A549 (cell line): ENCODE measurements at regions of chr11 and their contacts with region 1.

Region 1: GRCh38 chr11:45964911-45965389 is 42.5 kb downstream of the LARGE2 start:
- DNase-seq: peak; percentile 65 to 75
- ATAC-seq: peak; percentile 97 to 99
- H3K4me3 ChIP-seq: no peak overlapping the region
- H3K27ac ChIP-seq: no peak overlapping the region
- H3K4me1 ChIP-seq: no peaks in the 10 kb centered on the region
- CTCF ChIP-seq: peak; percentile 92
- EP300 ChIP-seq: no peak
- POLR2A ChIP-seq: no peak
- RAD21 ChIP-seq: peak; percentile 61 to 73

Region 2: GRCh38 chr11:45917623-45918330 is 47.2 kb before region 1 on chr11 and contains the start of gene PEX16:
- CTCF ChIA-PET with region 1: interaction called, 12 read pairs
- POLR2A ChIA-PET with region 1: no interaction called
- DNase-seq: peak; percentile 97 to 99
- ATAC-seq: peak; percentile 86 to 92
- H3K4me3 ChIP-seq: peak within 1 kb of the TSS; percentile 81
- H3K27ac ChIP-seq: peak within 1 kb of the TSS; percentile 88 to 96
- H3K4me1 ChIP-seq: peaks cover 13% of the 10 kb centered on the region; the same call in 2 of the 3 replicates
- CTCF ChIP-seq: no peak
- EP300 ChIP-seq: no peak
- POLR2A ChIP-seq: peak; percentile 87
- RAD21 ChIP-seq: no peak
- polyA plus RNA-seq, gene PEX16: 18.0 and 20.2 TPM in 2 replicates

Region 3: GRCh38 chr11:45935349-45936064 is 29.4 kb before region 1 on chr11:
- CTCF ChIA-PET with region 1: interaction called, 12 read pairs
- POLR2A ChIA-PET with region 1: no interaction called
- DNase-seq: no peak
- ATAC-seq: no peak
- H3K4me3 ChIP-seq: no peak overlapping the region
- H3K27ac ChIP-seq: no peak overlapping the region
- H3K4me1 ChIP-seq: no peaks in the 10 kb centered on the region
- CTCF ChIP-seq: no peak
- EP300 ChIP-seq: no peak
- POLR2A ChIP-seq: no peak
- RAD21 ChIP-seq: no peak

Region 4: DNA sequence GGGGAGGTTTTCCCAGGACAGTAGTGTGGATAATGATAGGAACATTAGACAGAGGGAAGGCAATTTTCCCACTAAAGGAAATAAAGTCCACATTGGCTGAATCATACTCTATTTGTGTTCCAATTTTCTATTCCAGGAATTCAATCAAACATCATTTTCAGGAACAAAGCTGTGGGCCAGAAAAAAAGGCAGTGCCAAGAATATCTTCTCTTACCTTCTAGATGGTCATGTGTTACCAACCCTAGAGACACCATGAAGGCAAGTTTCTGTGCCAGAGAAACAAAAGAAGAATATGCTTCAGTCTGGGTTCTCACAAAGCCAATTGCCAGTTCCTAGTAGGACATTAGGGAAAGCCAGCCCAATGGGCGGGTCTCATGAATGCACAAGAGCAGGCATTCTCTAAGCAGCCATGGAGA is 14.9 kb before region 1 on chr11:
- CTCF ChIA-PET with region 1: interaction called, 47 read pairs
- POLR2A ChIA-PET with region 1: no interaction called
- DNase-seq: no peak
- ATAC-seq: no peak
- H3K4me3 ChIP-seq: no peak overlapping the region
- H3K27ac ChIP-seq: no peak overlapping the region
- H3K4me1 ChIP-seq: no peaks in the 10 kb centered on the region
- CTCF ChIP-seq: no peak
- EP300 ChIP-seq: no peak
- POLR2A ChIP-seq: no peak
- RAD21 ChIP-seq: no peak

Region 5: GRCh38 chr11:45993531-45994001 is 28.6 kb after region 1 on chr11:
- CTCF ChIA-PET with region 1: interaction called, 11 read pairs
- POLR2A ChIA-PET with region 1: no interaction called
- DNase-seq: no peak
- ATAC-seq: no peak; a peak in 1 of 6 replicates
- H3K4me3 ChIP-seq: no peak overlapping the region
- H3K27ac ChIP-seq: no peak overlapping the region
- H3K4me1 ChIP-seq: no peaks in the 10 kb centered on the region
- CTCF ChIP-seq: no peak
- EP300 ChIP-seq: no peak
- POLR2A ChIP-seq: no peak
- RAD21 ChIP-seq: no peak

Region 6: GRCh38 chr11:46006418-46007070 is 41.6 kb after region 1 on chr11:
- CTCF ChIA-PET with region 1: interaction called, 37 read pairs
- POLR2A ChIA-PET with region 1: no interaction called
- DNase-seq: peak; percentile 73 to 74
- ATAC-seq: peak; percentile 88 to 94
- H3K4me3 ChIP-seq: no peak overlapping the region
- H3K27ac ChIP-seq: no peak overlapping the region
- H3K4me1 ChIP-seq: peaks cover 4% of the 10 kb centered on the region; the same call in 1 of the 3 replicates
- CTCF ChIP-seq: peak; percentile 82
- EP300 ChIP-seq: no peak
- POLR2A ChIP-seq: no peak
- RAD21 ChIP-seq: peak; percentile 66 to 76

Region 7: DNA sequence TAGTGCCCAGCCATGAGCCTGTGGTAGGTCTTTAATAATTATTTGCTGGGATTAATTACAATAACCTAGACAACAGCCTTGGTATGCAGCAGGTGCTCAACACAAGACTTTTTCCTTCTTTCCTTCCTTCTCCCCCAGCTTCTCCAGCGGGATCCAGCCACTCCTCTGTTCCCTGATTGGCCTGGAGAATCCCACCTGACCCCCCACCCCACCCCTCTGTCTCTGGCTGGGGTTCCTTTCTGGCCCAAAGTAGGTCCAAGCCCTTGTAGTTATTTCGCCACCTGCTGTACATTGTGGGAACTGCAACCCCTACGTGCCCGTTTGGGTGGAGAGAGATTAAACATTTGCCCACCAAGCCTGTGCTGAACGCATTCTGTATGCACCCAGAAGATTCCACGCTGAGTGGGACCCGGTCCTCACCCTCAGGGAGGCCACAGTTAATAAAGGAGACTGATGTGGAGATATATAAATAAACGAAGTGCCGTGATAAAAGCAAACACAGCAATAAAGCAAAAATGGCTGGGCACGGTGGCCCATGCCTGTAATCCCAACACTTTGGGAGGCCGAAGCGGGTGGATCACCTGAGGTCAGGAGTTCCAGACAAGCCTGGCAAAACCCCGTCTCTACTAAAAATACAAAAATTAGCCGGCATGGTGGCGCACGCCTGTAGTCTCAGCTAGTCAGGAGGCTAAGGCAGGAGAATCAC is 350.2 kb after region 1 on chr11:
- CTCF ChIA-PET with region 1: interaction called, 10 read pairs
- POLR2A ChIA-PET with region 1: no interaction called
- DNase-seq: peak; percentile 87 to 98
- ATAC-seq: peak; percentile 69 to 96
- H3K4me3 ChIP-seq: no peak overlapping the region
- H3K27ac ChIP-seq: no peak overlapping the region; a peak in 1 of 6 replicates
- H3K4me1 ChIP-seq: peaks cover under 1% of the 10 kb centered on the region; the same call in 1 of the 3 replicates
- CTCF ChIP-seq: peak; percentile 80
- EP300 ChIP-seq: no peak
- POLR2A ChIP-seq: no peak
- RAD21 ChIP-seq: peak; percentile 73 to 78

Region 8: DNA sequence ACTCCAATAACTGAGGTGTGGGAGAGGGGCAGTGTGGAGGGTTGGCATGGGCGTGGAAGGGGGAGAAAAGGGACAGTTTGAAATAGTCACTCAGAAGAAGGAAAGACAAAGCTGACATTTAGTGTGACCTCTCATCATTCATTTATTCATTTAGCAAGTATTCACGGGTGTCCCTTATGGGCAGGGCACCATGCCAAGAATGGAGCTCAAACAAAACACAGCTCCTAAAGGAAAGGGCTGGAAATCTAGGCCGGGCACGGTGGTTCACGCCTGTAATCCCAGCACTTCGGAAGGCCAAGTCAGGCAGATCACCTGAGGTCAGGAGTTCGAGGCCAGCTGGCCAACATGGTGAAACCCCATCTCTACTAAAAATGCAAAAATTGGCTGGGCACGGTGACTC is 362.9 kb after region 1 on chr11:
- CTCF ChIA-PET with region 1: no interaction called
- POLR2A ChIA-PET with region 1: no interaction called
- DNase-seq: no peak
- ATAC-seq: no peak
- H3K4me3 ChIP-seq: no peak overlapping the region
- H3K27ac ChIP-seq: no peak overlapping the region
- H3K4me1 ChIP-seq: no peaks in the 10 kb centered on the region
- CTCF ChIP-seq: no peak
- EP300 ChIP-seq: no peak
- POLR2A ChIP-seq: no peak
- RAD21 ChIP-seq: no peak